MCF 10A (cell line): ENCODE measurements at regions of chr12 and their contacts with region 1.

Region 1: GRCh38 chr12:6451348-6452244 is at the start of gene TAPBPL:
- DNase-seq: peak; percentile 72
- H3K4me3 Mint-ChIP-seq: peak within 1 kb of the TSS; percentile 94
- H3K27ac Mint-ChIP-seq: peak within 1 kb of the TSS; percentile 98
- H3K4me1 Mint-ChIP-seq: peaks cover 37% of the 10 kb centered on the region
- H3K27me3 Mint-ChIP-seq: no peaks in the 10 kb centered on the region
- CTCF ChIP-seq: no peak
- total RNA-seq, gene TAPBPL: 8.1 and 9.3 TPM in 2 replicates

Region 2: DNA sequence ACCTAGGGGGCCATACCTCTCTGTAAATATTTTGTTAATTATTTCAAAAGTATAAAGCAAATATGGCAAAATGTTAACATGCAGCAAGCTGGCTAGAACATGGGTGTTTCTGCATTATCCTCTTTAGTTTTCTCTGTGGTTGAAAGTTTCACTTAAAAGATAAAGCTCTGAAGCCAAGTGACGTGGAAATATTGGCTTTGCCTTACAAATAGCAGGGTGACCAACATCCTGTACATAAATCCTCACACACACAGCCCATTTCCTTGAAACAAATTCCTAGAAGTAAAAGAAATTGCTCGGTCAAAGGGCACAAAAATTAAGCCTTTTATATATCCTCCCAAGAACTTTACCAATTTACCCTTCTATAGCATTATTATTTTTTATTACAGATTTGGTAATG is 316.5 kb before region 1 on chr12:
- CTCF ChIA-PET with region 1: no interaction called
- POLR2A ChIA-PET with region 1: no interaction called
- intact Hi-C with region 1: no loop called
- DNase-seq: no peak
- H3K4me3 Mint-ChIP-seq: no peak overlapping the region
- H3K27ac Mint-ChIP-seq: no peak overlapping the region
- H3K4me1 Mint-ChIP-seq: no peaks in the 10 kb centered on the region
- H3K27me3 Mint-ChIP-seq: no peaks in the 10 kb centered on the region
- CTCF ChIP-seq: no peak

Region 3: DNA sequence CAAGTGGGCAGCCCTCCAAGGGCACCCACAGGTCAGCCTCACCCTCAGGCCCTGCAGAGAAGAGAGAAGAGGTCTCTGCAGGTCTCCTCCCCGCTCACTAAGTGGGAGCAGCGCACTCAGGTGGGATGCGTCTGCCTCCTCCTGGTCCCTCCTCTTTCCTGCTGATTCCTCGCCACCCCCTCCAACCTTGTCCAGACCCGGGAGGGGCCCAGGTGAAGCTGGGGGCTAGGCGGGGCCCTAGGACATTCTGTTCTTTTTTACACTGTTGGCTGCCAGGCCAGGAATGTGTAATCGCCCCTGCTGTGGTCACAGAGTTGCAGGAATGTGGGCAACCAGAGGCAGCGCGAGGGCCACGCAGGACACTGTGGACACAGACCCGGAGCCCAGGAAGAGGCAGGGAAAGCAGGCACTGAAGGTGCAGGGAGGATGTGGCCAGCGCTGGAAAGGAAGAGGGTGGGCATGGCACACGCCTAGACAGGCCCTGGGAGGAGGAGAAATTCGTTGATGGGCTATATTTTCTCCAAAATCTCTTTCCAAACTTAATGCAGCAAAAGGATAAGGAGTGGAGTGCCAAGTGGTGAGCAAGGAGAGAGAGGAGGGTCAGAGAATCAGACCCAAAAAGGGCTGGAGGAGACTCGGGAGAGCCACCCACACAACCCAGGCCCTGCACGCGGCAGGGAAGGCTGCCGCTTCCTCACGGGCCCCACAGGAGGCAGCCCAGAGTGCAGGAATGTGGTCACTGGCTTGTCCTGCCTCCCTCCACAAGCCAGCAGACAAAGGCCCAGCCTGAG is 75.3 kb before region 1 on chr12:
- CTCF ChIA-PET with region 1: no interaction called
- POLR2A ChIA-PET with region 1: interaction called, 13 read pairs
- intact Hi-C with region 1: no loop called
- DNase-seq: peak; percentile 97
- H3K4me3 Mint-ChIP-seq: peak overlapping the region; percentile 89
- H3K27ac Mint-ChIP-seq: peak overlapping the region; percentile 97
- H3K4me1 Mint-ChIP-seq: peaks cover 56% of the 10 kb centered on the region
- H3K27me3 Mint-ChIP-seq: no peaks in the 10 kb centered on the region
- CTCF ChIP-seq: no peak

Region 4: GRCh38 chr12:6423267-6424007 is 28.2 kb before region 1 on chr12:
- CTCF ChIA-PET with region 1: interaction called, 14 read pairs
- POLR2A ChIA-PET with region 1: interaction called, 10 read pairs
- intact Hi-C with region 1: no loop called
- DNase-seq: peak; percentile 96
- H3K4me3 Mint-ChIP-seq: no peak overlapping the region
- H3K27ac Mint-ChIP-seq: no peak overlapping the region
- H3K4me1 Mint-ChIP-seq: peaks cover 5% of the 10 kb centered on the region
- H3K27me3 Mint-ChIP-seq: no peaks in the 10 kb centered on the region
- CTCF ChIP-seq: peak; percentile 88

Region 5: GRCh38 chr12:6461401-6462233 is 10.0 kb after region 1 on chr12:
- CTCF ChIA-PET with region 1: interaction called, 33 read pairs
- POLR2A ChIA-PET with region 1: interaction called, 26 read pairs
- intact Hi-C with region 1: no loop called
- DNase-seq: no peak
- H3K4me3 Mint-ChIP-seq: no peak overlapping the region
- H3K27ac Mint-ChIP-seq: no peak overlapping the region
- H3K4me1 Mint-ChIP-seq: no peaks in the 10 kb centered on the region
- H3K27me3 Mint-ChIP-seq: no peaks in the 10 kb centered on the region
- CTCF ChIP-seq: no peak

Region 6: DNA sequence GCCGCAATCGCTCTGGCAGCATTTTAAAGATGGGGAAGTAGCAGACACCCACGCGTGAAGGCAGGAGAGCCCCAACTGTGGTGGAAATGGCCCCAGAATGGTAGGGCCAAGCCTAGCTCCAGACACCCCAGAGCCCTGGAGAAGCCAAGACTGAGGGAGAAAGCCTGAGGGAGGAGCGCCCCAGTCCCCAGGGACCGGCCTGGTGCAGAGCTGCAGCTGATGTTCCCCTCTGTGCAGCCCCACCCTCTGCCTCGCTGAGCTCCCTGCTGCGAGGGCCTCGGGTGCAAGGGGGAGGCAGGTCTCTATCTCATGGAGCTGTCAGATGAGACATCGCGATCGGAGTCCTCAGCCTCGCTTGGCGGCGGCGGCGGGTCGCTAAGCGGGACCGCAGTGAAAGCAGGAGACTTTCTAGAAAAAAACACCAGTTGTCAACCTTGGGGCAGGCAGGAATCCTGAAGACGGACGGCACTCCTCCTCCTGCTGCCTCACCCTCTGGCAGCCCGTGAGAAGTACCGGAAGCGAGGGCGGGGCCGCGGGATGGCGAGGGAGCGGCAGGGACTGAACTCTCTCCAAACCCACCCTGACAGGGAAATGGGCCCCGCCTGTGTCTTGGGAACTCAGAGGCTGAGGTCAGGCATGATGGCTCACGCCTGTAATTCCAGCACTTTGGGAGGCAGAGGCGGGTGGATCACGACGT is 88.7 kb after region 1 on chr12:
- CTCF ChIA-PET with region 1: interaction called, 3 read pairs
- POLR2A ChIA-PET with region 1: interaction called, 28 read pairs
- intact Hi-C with region 1: no loop called
- DNase-seq: peak; percentile 97
- H3K4me3 Mint-ChIP-seq: peak overlapping the region; percentile 63
- H3K27ac Mint-ChIP-seq: peak overlapping the region; percentile 90
- H3K4me1 Mint-ChIP-seq: peaks cover 32% of the 10 kb centered on the region
- H3K27me3 Mint-ChIP-seq: no peaks in the 10 kb centered on the region
- CTCF ChIP-seq: no peak